ENCODE measurements at regions of chrX and their contacts with region 1.

Region 1: DNA sequence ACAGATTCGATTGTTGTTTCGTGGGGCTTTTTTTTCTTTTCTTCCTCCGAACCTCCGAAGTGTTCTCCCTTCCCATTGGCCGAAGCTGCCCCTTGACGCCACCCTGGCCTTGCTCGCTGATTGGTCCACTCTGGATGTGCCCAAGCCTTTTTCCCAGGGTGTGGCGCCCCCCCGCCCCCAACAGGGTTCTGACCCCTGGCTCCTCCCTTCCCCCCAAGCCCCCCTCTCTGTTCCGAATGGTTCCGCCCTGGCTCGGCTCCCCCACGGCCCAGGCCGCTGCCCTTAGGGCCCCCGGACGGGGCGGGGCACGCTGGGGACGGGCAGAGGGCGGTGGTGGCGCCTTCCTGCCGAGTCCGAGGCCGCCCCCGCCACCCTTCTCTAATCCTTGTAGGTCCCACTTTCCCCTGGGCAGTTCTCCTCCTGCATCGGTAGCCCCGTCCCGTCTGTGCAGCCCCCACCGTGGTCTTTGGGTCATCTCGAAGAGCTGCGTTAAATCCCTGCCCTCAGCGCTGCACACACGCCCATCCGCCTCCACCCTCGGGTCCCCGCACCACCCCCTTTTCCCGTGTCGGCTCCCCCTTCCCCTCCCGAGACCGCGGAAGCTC is 25.5 kb downstream of the UTP14A start:
- DNase-seq: peak; percentile 52
- H3K4me3 Mint-ChIP-seq: peak overlapping the region; percentile 81
- H3K27ac Mint-ChIP-seq: peak overlapping the region; percentile 80
- H3K4me1 Mint-ChIP-seq: peaks cover 5% of the 10 kb centered on the region
- H3K27me3 Mint-ChIP-seq: peaks cover 9% of the 10 kb centered on the region

Region 2: GRCh38 chrX:129472116-129472515 is 459.4 kb before region 1 on chrX:
- intact Hi-C with region 1: no loop called
- DNase-seq: no peak
- H3K4me3 Mint-ChIP-seq: no peak overlapping the region
- H3K27ac Mint-ChIP-seq: no peak overlapping the region
- H3K4me1 Mint-ChIP-seq: no peaks in the 10 kb centered on the region
- H3K27me3 Mint-ChIP-seq: peaks cover 2% of the 10 kb centered on the region

Region 3: GRCh38 chrX:129600981-129601424 is 330.5 kb before region 1 on chrX:
- intact Hi-C with region 1: loop called (anchors 5 kb)
- DNase-seq: no peak
- H3K4me3 Mint-ChIP-seq: no peak overlapping the region
- H3K27ac Mint-ChIP-seq: no peak overlapping the region
- H3K4me1 Mint-ChIP-seq: peaks cover 19% of the 10 kb centered on the region
- H3K27me3 Mint-ChIP-seq: peaks cover 2% of the 10 kb centered on the region

Region 4: GRCh38 chrX:129793604-129794191 is 137.8 kb before region 1 on chrX:
- intact Hi-C with region 1: no loop called
- DNase-seq: no peak
- H3K4me3 Mint-ChIP-seq: no peak overlapping the region
- H3K27ac Mint-ChIP-seq: no peak overlapping the region
- H3K4me1 Mint-ChIP-seq: peaks cover 5% of the 10 kb centered on the region
- H3K27me3 Mint-ChIP-seq: no peaks in the 10 kb centered on the region

Region 5: DNA sequence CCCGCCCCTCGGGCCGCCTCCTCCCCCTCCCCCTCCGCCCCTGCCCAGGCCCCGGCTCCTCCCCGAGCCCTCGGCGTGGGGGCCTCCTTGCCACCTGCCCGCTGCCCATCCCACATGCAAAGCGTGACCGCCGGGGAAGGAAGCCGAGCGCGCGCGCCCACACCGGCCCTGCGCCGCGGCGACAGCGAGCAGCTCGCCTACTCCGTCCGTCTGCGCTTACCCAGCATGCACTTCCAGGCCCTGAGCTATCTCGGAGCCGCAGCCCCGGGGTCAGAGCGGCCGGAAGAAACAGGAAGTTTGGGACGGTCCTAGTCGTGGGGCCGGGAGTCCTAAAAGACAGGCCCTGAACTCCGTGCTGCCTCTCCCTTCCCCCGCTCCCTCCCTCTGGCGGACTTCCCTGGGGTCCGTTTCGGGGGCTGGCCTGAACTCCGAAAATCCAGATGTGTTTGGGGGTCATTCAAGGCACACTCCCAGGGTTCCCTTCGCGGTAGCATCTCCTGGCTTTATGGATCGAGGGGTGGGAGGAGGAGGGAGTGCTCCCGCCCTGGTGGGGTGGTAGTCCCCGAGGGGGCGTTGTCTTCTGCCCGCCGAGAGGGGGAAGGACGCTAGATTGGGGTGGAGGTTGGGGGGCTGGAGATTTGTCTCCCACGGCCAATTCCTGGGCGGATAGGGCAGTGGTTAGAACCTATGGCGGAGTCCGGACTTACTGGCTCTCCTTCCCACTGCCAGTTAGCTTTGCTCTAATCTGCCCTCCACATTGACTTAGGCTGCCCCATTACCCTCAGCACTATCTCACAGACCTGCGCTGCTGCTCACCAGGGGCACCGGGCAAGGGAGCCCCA is 25.9 kb after region 1 on chrX:
- intact Hi-C with region 1: loop called (anchors 1 kb)
- DNase-seq: peak; percentile 41
- H3K4me3 Mint-ChIP-seq: peak overlapping the region; percentile 51
- H3K27ac Mint-ChIP-seq: no peak overlapping the region
- H3K4me1 Mint-ChIP-seq: peaks cover 19% of the 10 kb centered on the region
- H3K27me3 Mint-ChIP-seq: peaks cover 8% of the 10 kb centered on the region

Region 6: GRCh38 chrX:130024127-130024526 is 92.6 kb after region 1 on chrX:
- intact Hi-C with region 1: loop called (anchors 1 kb)
- DNase-seq: peak; percentile 78
- H3K4me3 Mint-ChIP-seq: peak overlapping the region; percentile 60
- H3K27ac Mint-ChIP-seq: peak overlapping the region; percentile 44
- H3K4me1 Mint-ChIP-seq: peaks cover 14% of the 10 kb centered on the region
- H3K27me3 Mint-ChIP-seq: no peaks in the 10 kb centered on the region

Measured in activated T-helper 1 cell treated with anti-CD3 and anti-CD28 coated beads, Interleukin-12 subunit alpha, Interleukin-12 subunit beta, Interleukin-2, Interleukin-4 antibody, amounts not matched to agents 30 ng/mL and 10 ng/mL and 1 ng/mL, durations not matched to agents 14 hours and 24 hours and 36 hours (primary cell).